ENCODE measurements at regions of chr13 and their contacts with region 1.

Region 1: GRCh38 chr13:32246468-32246867 is 68.7 kb downstream of the ZAR1L start:
- DNase-seq: peak; percentile 76
- ATAC-seq: peak; percentile 96
- H3K4me3 ChIP-seq: no peak overlapping the region
- H3K27ac ChIP-seq: no peak overlapping the region
- H3K4me1 ChIP-seq: peaks cover 3% of the 10 kb centered on the region
- H3K27me3 ChIP-seq: no peaks in the 10 kb centered on the region
- CTCF ChIP-seq: peak; percentile 75
- POLR2A ChIP-seq: no peak
- RAD21 ChIP-seq: peak; percentile 75

Region 2: DNA sequence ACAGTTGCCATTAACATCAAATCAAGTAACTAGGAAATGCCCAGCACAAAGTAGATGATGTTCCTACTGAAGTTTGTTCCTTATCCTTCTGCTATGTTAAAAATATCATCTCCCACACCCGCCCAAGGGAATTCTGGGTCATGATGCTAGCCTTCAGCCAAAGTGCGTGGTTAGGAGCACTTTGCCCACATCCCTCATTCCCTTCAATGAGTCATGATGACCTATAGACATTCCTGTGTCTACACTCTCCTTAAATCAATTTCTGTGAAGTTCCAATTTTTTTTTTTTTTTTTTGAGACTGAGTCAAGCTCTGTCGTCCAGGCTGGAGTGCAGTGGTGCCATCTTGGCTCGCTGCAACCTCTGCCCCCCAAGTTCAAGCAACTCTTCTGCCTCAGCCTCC is 490.1 kb before region 1 on chr13:
- CTCF ChIA-PET with region 1: no interaction called
- POLR2A ChIA-PET with region 1: no interaction called
- dilution Hi-C with region 1: no loop called
- in situ Hi-C with region 1: no loop called
- intact Hi-C with region 1: no loop called
- DNase-seq: peak; percentile 94
- ATAC-seq: peak; percentile 63
- H3K4me3 ChIP-seq: no peak overlapping the region
- H3K27ac ChIP-seq: peak overlapping the region; percentile 38; the same call in 1 of the 2 replicates
- H3K4me1 ChIP-seq: peaks cover 6% of the 10 kb centered on the region; the same call in 1 of the 2 replicates
- H3K27me3 ChIP-seq: no peaks in the 10 kb centered on the region
- CTCF ChIP-seq: no peak
- POLR2A ChIP-seq: no peak
- RAD21 ChIP-seq: no peak

Region 3: DNA sequence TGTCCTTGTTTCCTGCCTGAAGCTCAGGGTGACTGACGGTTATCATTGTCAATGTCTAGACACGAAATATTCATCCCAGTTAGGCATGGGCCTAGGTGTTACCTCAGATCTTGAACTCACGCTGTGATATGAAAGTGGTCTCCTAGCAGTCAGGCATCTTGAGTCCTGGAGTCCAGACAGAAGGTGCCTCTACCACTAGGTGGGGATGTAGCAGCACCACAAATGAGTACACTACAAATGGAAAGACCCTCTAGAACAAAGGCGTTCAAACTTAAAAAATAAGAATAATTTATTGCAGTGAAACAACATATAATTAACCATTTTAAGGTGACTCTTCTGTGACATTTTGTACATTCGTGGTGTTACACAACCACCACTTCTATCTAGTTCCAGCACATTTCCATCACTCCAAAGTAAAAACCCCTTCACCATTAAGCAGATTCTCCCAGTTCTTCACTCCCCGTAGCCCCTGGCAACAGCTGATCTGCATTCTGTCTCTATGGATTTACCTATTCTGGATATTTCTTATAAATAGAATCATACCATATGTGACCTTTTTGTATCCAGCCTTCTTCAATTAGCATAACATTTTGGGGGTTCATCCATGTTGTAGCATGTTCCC is 226.7 kb before region 1 on chr13:
- CTCF ChIA-PET with region 1: no interaction called
- POLR2A ChIA-PET with region 1: no interaction called
- dilution Hi-C with region 1: no loop called
- in situ Hi-C with region 1: no loop called
- intact Hi-C with region 1: loop called (anchors 5 kb)
- DNase-seq: peak; percentile 81
- ATAC-seq: peak; percentile 87
- H3K4me3 ChIP-seq: no peak overlapping the region
- H3K27ac ChIP-seq: no peak overlapping the region
- H3K4me1 ChIP-seq: peaks cover 5% of the 10 kb centered on the region; the same call in 1 of the 2 replicates
- H3K27me3 ChIP-seq: peaks cover 1% of the 10 kb centered on the region; the same call in 1 of the 2 replicates
- CTCF ChIP-seq: peak; percentile 84
- POLR2A ChIP-seq: no peak
- RAD21 ChIP-seq: peak; percentile 82

Measured in IMR-90 (cell line).